Activated CD4-positive, alpha-beta T cell treated with anti-CD3 and anti-CD28 coated beads, Interleukin-2, amount 10 ng/mL, durations not matched to agents 7 days and 5 days (primary cell): ENCODE measurements at regions of chr2 and their contacts with region 1.

Region 1: DNA sequence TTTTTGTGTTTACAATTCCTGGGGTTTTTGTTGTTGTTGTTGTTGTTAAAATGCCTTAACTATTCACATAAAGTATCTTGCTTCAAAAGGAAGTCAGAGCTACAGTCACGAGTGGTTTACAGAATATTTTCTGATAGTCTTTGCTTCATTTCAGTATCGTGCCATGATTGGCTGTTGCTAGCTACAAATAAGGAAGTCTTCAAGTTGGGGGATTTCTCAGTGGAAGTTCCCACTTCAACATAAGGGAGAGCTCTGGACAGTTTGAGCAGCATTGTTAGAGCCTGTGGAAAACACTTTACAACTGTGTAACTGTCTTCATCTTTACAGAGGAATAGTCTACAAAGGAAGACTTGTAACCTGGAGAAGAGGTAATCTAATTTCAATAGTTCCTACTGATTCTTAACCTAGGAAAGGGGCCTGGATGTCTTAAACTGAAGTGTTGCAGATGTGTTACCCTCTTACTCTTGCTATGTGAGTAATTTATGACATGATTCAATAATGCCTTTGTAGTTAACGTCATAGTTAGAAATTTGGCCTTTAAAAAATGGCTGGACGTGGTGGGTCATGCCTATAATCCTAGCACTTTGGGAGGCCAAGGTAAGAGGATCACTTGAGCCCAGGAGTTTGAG is 23.4 kb upstream of the TANK start:
- DNase-seq: peak; percentile 46
- H3K4me3 Mint-ChIP-seq: peak overlapping the region; percentile 84
- H3K27ac Mint-ChIP-seq: peak overlapping the region; percentile 93
- H3K4me1 Mint-ChIP-seq: peaks cover 60% of the 10 kb centered on the region
- H3K27me3 Mint-ChIP-seq: no peaks in the 10 kb centered on the region

Region 2: GRCh38 chr2:161118722-161119121 is 18.1 kb before region 1 on chr2:
- CTCF ChIA-PET with region 1: interaction called, 11 read pairs
- POLR2A ChIA-PET with region 1: no interaction called
- DNase-seq: no peak
- H3K4me3 Mint-ChIP-seq: no peak overlapping the region
- H3K27ac Mint-ChIP-seq: no peak overlapping the region
- H3K4me1 Mint-ChIP-seq: peaks cover 11% of the 10 kb centered on the region
- H3K27me3 Mint-ChIP-seq: peaks cover 2% of the 10 kb centered on the region

Region 3: GRCh38 chr2:162058973-162059668 is 922.3 kb after region 1 on chr2:
- CTCF ChIA-PET with region 1: no interaction called
- POLR2A ChIA-PET with region 1: interaction called, 10 read pairs
- DNase-seq: peak; percentile 35
- H3K4me3 Mint-ChIP-seq: peak overlapping the region; percentile 72
- H3K27ac Mint-ChIP-seq: peak overlapping the region; percentile 94
- H3K4me1 Mint-ChIP-seq: peaks cover 94% of the 10 kb centered on the region
- H3K27me3 Mint-ChIP-seq: no peaks in the 10 kb centered on the region